ENCODE measurements at regions of chr3 and their contacts with region 1.

Region 1: DNA sequence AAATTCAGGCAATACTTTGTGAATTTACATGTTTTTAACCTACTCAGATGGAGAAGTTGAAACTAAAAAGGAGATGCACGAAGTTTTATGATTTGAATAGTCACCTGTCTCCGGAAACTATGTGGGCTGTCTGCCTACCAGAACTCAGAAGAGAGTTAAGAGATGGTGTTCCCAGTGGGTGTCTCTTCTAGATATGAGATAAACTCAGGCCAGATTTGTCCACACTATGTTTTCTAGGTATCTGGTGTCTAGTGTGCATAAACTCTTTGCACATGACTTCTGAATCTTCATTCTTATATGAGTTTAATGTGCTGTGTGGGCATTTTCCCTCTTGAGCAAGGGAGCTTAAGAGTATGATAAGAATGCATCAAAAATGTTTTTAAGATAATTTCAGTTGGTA is 222.8 kb downstream of the FOXP1 start:
- DNase-seq: no peak
- ATAC-seq: peak; percentile 67
- H3K4me3 Mint-ChIP-seq: peak overlapping the region; percentile 59
- H3K27ac Mint-ChIP-seq: peak overlapping the region; percentile 86
- H3K4me1 Mint-ChIP-seq: peaks cover 83% of the 10 kb centered on the region
- H3K27me3 Mint-ChIP-seq: no peaks in the 10 kb centered on the region
- CTCF ChIP-seq: no peak

Region 2: DNA sequence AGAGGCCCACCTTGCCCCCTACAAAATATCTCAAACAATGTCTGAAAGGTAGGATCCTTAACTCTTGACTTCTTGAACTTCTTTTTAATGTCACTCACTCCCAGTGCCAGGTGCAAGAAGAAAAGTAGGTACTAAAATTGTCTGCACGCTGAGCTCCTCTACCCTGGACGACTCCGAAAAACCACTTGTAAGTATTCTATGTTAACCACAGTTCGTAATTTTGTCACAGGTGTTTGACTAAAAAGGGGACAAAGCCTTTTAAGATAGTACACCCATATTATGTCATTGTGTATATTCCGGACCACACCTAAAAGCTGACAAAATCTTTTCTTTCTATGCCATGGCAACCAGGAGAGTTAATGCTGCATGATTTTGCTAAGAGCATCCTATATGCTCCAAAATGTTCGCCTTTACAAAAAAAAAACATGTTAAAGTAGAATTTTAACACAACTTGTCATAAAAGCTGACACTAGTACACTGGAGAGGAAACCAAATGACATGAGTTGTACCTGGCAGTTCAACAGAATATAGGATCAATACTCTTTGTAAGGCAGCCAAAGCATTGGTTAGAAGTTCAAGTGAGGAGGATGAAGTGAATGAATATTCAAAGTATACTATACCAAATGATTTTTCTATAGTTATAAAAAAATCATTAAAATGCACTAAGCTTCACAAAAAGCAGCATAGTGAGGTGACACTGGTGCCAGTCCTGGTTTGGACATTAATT is 12.3 kb after region 1 on chr3:
- CTCF ChIA-PET with region 1: interaction called, 12 read pairs
- POLR2A ChIA-PET with region 1: interaction called, 21 read pairs
- intact Hi-C with region 1: loop called (anchors 1 kb)
- DNase-seq: peak; percentile 47
- ATAC-seq: peak; percentile 76
- H3K4me3 Mint-ChIP-seq: peak overlapping the region; percentile 20
- H3K27ac Mint-ChIP-seq: peak overlapping the region; percentile 60
- H3K4me1 Mint-ChIP-seq: peaks cover 78% of the 10 kb centered on the region
- H3K27me3 Mint-ChIP-seq: no peaks in the 10 kb centered on the region
- CTCF ChIP-seq: no peak

Region 3: DNA sequence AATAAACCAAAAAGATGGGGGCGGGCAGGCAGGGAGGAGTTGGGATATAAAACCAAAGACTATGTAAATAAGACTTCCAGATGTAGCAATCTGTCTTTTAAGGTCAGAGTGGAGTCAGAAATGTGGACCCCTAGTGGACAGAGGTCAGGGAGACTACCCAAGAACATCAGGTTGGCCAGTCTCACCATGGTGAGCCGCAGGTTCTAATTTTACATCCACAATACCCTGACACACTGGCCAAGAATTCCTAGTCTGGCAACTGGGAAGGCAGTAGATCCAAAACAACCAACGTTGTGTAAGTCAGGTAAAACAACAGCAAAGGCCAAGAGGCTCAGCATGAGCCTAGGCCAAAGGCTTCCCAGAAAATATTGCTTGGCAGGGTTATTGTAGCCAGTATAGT is 19.3 kb after region 1 on chr3:
- CTCF ChIA-PET with region 1: interaction called, 12 read pairs
- POLR2A ChIA-PET with region 1: interaction called, 21 read pairs
- intact Hi-C with region 1: loop called (anchors 1 kb)
- DNase-seq: no peak
- ATAC-seq: no peak
- H3K4me3 Mint-ChIP-seq: no peak overlapping the region
- H3K27ac Mint-ChIP-seq: peak overlapping the region; percentile 91
- H3K4me1 Mint-ChIP-seq: peaks cover 88% of the 10 kb centered on the region
- H3K27me3 Mint-ChIP-seq: no peaks in the 10 kb centered on the region
- CTCF ChIP-seq: peak; percentile 43

Measured in activated CD8-positive, alpha-beta T cell treated with anti-CD3 and anti-CD28 coated beads for 36 hours (primary cell).